Common myeloid progenitor, CD34-positive (primary cell): ENCODE measurements at regions of chr16 and their contacts with region 1.

Region 1: DNA sequence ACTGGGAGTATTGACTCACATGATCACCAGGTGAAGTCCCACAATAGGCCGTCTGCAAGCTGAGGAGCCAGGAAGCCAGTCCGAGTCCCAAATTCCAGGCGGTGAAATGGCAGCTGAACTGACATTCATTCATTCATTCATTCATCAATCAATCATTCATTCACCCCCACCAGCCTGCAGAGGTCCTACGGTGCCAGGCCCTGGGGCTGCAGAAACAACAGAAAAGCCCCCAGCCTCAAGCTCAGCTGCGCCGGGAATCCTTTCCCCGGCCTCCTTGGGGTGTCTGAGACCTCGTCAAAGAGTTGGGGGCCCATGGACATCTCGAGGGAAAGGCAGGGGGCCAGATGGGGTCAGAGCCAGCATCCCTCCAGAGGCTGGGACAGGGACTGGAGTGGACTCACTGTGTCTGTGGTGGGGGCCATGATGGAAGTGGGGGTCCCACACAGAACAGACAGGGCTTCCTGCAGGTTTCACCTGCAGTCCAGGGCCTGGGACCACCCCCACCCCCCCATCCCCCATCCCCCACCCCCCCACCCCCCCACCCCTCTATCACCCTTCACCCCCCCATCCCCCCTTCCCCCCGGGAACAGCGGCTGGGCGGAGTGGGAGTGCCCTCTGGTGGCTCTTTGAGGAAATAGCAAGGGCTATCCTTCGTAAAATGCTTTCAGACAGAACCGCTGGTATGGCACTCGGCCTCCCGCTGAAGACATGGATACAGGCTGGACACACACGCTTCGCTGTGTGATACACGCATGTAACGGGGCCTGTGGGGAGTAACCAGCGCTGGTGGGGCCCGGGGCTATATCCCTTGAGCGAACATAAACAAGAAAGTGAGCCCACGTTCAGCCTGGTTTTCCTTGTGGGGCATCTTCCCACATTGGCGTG is 8.5 kb upstream of the ZC3H18 start:
- DNase-seq: peak; percentile 62 to 70 (median 63)
- H3K4me3 ChIP-seq: peak overlapping the region in 1 of 7 experiments; percentile 23
- H3K27ac ChIP-seq: no peak overlapping the region
- H3K4me1 ChIP-seq: peaks cover 0 to 6% (median 4%) of the 10 kb centered on the region in 4 experiments
- H3K27me3 ChIP-seq: peaks cover 0 to 3% (median 0%) of the 10 kb centered on the region in 5 experiments

Region 2: GRCh38 chr16:88539652-88540345 is 21.9 kb before region 1 on chr16:
- CTCF ChIA-PET with region 1: interaction called, 11 read pairs
- POLR2A ChIA-PET with region 1: no interaction called
- DNase-seq: peak in 1 of 3 donors; percentile 17
- H3K4me3 ChIP-seq: no peak overlapping the region
- H3K27ac ChIP-seq: no peak overlapping the region
- H3K4me1 ChIP-seq: peaks cover 0 to 8% (median 3%) of the 10 kb centered on the region in 4 experiments
- H3K27me3 ChIP-seq: peaks cover 0 to 44% (median 4%) of the 10 kb centered on the region in 5 experiments

Region 3: GRCh38 chr16:88550246-88550661 is 11.5 kb before region 1 on chr16:
- CTCF ChIA-PET with region 1: interaction called, 20 read pairs
- POLR2A ChIA-PET with region 1: no interaction called
- DNase-seq: no peak
- H3K4me3 ChIP-seq: peak overlapping the region in 3 of 7 experiments; percentile 11 to 54 (median 46)
- H3K27ac ChIP-seq: no peak overlapping the region
- H3K4me1 ChIP-seq: peaks cover 0 to 38% (median 23%) of the 10 kb centered on the region in 4 experiments
- H3K27me3 ChIP-seq: peaks cover 0 to 15% (median 0%) of the 10 kb centered on the region in 5 experiments